Naive thymus-derived CD4-positive, alpha-beta T cell (primary cell): ENCODE measurements at regions of chr3 and their contacts with region 1.

Region 1: DNA sequence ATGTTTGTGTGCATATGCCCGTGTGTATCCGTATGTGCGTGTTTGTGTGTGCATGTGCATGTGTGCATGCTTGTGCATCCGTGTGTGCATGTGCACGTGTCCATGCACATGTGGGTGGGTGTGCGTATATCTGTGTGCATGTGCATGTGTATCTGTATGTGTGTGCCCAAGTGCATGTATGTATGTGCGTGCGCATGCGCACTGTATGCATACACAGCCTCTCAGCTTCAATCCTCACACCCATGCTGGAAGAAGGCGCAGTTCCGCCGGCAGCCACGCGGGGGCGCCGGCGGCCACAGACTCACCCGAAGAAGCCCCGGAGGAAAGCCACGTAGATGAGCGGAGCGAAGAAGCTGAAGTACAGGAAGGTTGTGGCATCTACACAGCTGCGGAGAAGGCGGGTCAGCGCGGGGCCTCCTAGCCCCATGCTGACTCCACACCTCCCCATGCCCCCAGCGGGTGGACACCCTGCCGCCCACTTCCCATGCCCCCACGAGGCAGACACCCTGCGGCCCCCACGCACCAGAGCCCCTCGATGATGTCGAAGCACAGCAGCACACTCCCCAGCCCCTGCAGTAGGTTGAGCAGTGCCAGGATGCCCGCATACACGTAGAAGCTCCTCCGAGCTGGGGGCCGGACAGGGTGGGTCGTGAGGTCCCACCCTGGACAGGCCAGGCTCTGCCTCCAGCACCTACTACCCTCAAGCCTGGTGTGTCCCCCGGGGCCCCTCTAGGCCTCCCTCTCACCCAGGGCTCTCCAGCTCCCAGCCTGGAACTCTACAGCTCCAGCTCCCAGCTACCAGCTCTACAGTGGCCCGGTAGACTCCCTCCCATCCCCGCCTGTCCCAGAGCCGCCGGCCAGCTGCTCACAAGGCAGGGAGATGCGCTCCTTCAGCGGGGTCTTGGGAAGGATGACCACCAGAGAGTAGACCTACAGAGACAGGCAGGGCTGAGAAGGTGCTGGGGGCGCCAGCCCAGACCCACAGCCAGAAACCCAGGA is 15.4 kb downstream of the TPRA1 start:
- DNase-seq: peak; percentile 77 to 86 (median 83)
- ATAC-seq: peak; percentile 96
- H3K4me3 ChIP-seq: no peak overlapping the region
- H3K4me3 Mint-ChIP-seq: peak overlapping the region in 7 of 10 donors; percentile 18 to 57 (median 32)
- H3K27ac ChIP-seq: peak overlapping the region; percentile 39
- H3K27ac Mint-ChIP-seq: peak overlapping the region in 8 of 9 donors; percentile 4 to 81 (median 50)
- H3K4me1 ChIP-seq: peaks cover 0 to 7% of the 10 kb centered on the region in 2 donors
- H3K4me1 Mint-ChIP-seq: peaks cover 8 to 22% (median 13%) of the 10 kb centered on the region in 7 donors
- H3K27me3 ChIP-seq: no peaks in the 10 kb centered on the region
- H3K27me3 Mint-ChIP-seq: no peaks in the 10 kb centered on the region

Region 2: GRCh38 chr3:127351775-127352350 is 223.3 kb before region 1 on chr3:
- CTCF ChIA-PET with region 1: no interaction called
- POLR2A ChIA-PET with region 1: no interaction called
- intact Hi-C with region 1: no loop called
- DNase-seq: no peak
- ATAC-seq: no peak
- H3K4me3 ChIP-seq: no peak overlapping the region
- H3K4me3 Mint-ChIP-seq: no peak overlapping the region
- H3K27ac ChIP-seq: no peak overlapping the region
- H3K27ac Mint-ChIP-seq: no peak overlapping the region
- H3K4me1 ChIP-seq: no peaks in the 10 kb centered on the region
- H3K4me1 Mint-ChIP-seq: no peaks in the 10 kb centered on the region
- H3K27me3 ChIP-seq: no peaks in the 10 kb centered on the region
- H3K27me3 Mint-ChIP-seq: peaks cover 0 to 28% (median 13%) of the 10 kb centered on the region in 5 donors

Region 3: DNA sequence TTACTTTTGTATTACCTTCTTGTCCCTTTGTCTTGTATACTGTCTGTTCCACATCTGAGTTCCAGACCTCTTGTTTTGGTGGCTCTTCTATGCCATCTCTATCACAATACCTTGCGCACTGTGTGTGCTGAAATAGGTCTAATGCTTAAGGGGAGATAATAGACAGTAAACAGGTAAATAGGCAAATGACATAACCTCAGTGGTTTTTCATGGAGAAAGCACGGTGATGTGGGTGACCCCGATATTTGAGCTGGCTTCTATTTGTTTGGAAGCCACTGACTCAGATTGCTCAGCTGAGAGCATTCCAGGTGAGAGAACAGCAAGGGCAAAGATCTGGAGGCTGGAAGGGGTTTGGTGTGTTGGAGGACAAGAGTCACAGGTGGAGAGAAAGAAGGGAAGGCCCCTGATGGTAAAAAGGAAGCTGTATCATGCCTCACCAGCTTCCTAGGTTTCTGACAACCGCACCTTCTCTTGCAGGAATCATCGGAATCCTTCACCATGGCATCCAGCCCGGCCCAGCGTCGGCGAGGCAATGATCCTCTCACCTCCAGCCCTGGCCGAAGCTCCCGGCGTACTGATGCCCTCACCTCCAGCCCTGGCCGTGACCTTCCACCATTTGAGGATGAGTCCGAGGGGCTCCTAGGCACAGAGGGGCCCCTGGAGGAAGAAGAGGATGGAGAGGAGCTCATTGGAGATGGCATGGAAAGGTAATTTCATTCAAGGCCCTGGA is 23.8 kb after region 1 on chr3:
- CTCF ChIA-PET with region 1: interaction called, 9 read pairs
- POLR2A ChIA-PET with region 1: no interaction called
- intact Hi-C with region 1: loop called in 1 of 2 experiments (anchors 1 kb)
- DNase-seq: no peak
- ATAC-seq: no peak
- H3K4me3 ChIP-seq: peak overlapping the region; percentile 75
- H3K4me3 Mint-ChIP-seq: peak overlapping the region; percentile 62 to 89 (median 82)
- H3K27ac ChIP-seq: peak overlapping the region; percentile 70
- H3K27ac Mint-ChIP-seq: peak overlapping the region; percentile 57 to 93 (median 86)
- H3K4me1 ChIP-seq: peaks cover 7% of the 10 kb centered on the region in 2 donors
- H3K4me1 Mint-ChIP-seq: peaks cover 13 to 57% (median 16%) of the 10 kb centered on the region in 7 donors
- H3K27me3 ChIP-seq: no peaks in the 10 kb centered on the region
- H3K27me3 Mint-ChIP-seq: no peaks in the 10 kb centered on the region

Region 4: DNA sequence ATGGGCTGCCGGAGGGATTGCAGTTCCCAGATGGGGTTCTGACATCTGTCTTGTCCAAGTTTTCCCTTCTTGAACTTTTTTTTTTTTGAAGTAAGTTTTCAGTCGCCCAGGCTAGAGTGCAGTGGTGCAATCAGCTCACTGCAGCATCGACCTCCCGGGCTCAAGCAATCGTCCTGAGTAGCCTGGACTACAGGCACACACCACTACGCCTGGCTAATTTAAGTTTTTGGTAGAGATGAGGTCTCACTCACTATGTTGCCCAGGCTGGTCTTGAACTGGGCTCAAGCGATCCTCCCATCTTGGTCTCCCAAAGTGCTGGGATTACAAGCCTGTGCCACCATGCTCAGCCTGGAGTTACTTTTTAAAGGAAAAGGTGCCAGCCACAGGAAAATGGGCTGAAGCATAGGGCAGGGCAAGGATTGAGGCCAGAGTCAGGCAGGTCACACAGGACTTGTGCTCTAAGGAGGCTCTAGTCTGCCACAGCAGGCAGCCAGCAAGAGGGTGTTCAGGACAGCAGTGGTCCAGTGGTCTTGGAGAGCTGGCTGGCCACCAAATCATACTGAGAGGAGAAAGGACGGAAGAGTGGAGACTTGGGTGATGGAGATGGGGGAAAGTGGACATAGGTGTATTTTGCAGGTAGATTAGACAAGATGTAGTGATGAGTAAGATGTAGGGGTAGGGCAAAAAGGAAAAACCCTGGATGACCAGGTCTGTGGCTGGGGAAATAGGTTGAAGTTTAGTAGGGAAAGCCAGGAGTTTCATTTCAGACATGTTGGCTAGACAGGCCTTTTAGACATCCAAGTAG is 47.8 kb after region 1 on chr3:
- CTCF ChIA-PET with region 1: no interaction called
- POLR2A ChIA-PET with region 1: no interaction called
- intact Hi-C with region 1: no loop called
- DNase-seq: no peak
- ATAC-seq: no peak
- H3K4me3 ChIP-seq: no peak overlapping the region
- H3K4me3 Mint-ChIP-seq: no peak overlapping the region
- H3K27ac ChIP-seq: no peak overlapping the region
- H3K27ac Mint-ChIP-seq: peak overlapping the region in 1 of 9 donors; percentile 45
- H3K4me1 ChIP-seq: peaks cover 0 to 6% of the 10 kb centered on the region in 2 donors
- H3K4me1 Mint-ChIP-seq: peaks cover 0 to 14% (median 4%) of the 10 kb centered on the region in 7 donors
- H3K27me3 ChIP-seq: no peaks in the 10 kb centered on the region
- H3K27me3 Mint-ChIP-seq: peaks cover 0 to 21% (median under 1%) of the 10 kb centered on the region in 5 donors

Region 5: DNA sequence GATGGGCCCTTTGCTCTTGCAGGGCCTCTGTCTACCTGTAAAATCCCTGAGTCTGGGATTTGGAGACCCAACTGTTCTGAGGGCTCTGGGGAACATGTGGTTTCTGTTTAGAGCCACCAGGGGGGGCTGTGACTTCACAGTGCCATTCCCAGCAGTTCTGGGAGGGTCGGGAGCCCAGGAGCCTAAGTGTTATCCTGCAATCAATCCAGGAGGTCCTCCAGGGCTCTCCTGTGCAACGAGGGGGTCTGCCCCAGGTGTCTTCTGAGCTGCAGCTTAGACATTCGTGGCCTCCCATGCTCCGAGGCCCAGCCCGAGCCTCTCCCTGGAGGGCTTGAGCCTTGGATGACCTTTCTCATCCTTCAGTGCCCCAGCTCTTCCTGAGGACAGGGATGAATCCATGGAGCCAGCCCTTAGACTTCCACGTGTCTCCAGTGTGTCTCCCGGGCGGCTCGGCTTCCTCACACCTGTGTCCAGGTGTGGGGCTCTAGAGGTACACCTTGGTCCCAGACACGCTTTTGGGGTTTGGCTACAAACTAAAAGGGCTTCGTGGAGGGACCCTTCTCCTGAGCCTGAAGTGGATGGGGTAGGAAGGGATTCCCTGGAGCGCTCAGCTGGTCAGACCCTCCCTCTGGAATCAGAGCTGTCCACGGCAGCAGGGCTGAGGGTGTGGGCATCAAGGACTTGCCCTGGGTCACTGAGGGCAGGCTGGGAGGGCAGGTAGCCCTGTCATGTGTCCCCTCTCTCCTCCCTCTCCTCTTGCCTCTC is 77.2 kb after region 1 on chr3:
- CTCF ChIA-PET with region 1: no interaction called
- POLR2A ChIA-PET with region 1: no interaction called
- intact Hi-C with region 1: loop called in 1 of 2 experiments (anchors 2 kb)
- DNase-seq: peak in 3 of 9 donors; percentile 16 to 44 (median 35)
- ATAC-seq: peak; percentile 83
- H3K4me3 ChIP-seq: no peak overlapping the region
- H3K4me3 Mint-ChIP-seq: no peak overlapping the region
- H3K27ac ChIP-seq: no peak overlapping the region
- H3K27ac Mint-ChIP-seq: peak overlapping the region in 1 of 9 donors; percentile 3
- H3K4me1 ChIP-seq: no peaks in the 10 kb centered on the region
- H3K4me1 Mint-ChIP-seq: peaks cover 0 to 2% (median 0%) of the 10 kb centered on the region in 7 donors
- H3K27me3 ChIP-seq: no peaks in the 10 kb centered on the region
- H3K27me3 Mint-ChIP-seq: peaks cover 0 to 4% (median 0%) of the 10 kb centered on the region in 5 donors

Region 6: DNA sequence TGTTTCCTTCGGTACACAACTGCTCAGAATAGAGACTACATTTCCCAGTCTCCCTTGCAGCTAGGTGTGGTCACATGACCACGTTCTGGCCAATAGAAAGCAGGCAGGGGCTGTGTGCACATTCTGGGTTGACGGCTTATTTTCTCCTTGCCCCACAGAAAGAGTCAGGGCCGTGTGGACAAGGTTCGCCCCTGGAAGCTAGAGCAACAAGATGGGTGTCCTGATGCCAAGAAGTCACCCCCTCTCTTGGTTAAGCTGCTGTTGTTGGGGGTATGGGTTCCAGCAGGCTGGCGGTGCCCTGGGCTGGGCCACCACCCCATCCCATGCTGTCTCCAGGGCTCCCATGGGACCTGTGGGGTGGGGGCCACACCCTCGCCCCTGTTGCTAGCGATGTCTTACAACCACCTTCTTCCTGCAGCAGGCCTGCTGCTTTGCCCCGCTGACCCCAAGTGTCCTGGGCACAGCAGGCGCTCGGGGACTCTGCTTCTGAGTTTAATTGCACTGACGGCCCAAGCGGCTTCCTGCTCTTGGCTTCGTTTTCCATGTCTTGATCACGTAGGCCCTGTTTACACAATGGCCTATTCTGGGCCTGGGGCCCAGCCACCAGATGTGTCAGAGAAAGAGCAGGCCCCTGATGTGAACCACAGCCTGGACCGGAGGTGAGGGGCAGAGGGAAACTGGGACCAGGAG is 122.5 kb after region 1 on chr3:
- CTCF ChIA-PET with region 1: interaction called, 17 read pairs
- POLR2A ChIA-PET with region 1: no interaction called
- intact Hi-C with region 1: loop called (anchors 1 kb)
- DNase-seq: peak in 8 of 9 donors; percentile 27 to 59 (median 48)
- ATAC-seq: peak; percentile 76
- H3K4me3 ChIP-seq: no peak overlapping the region
- H3K4me3 Mint-ChIP-seq: peak overlapping the region in 2 of 10 donors; percentile 31 to 52
- H3K27ac ChIP-seq: no peak overlapping the region
- H3K27ac Mint-ChIP-seq: peak overlapping the region in 1 of 9 donors; percentile 77
- H3K4me1 ChIP-seq: no peaks in the 10 kb centered on the region
- H3K4me1 Mint-ChIP-seq: peaks cover 0 to 5% (median 4%) of the 10 kb centered on the region in 7 donors
- H3K27me3 ChIP-seq: no peaks in the 10 kb centered on the region
- H3K27me3 Mint-ChIP-seq: peaks cover 0 to 5% (median 0%) of the 10 kb centered on the region in 5 donors

Region 7: GRCh38 chr3:127729556-127730056 is 154.4 kb after region 1 on chr3:
- CTCF ChIA-PET with region 1: no interaction called
- POLR2A ChIA-PET with region 1: no interaction called
- intact Hi-C with region 1: no loop called
- DNase-seq: no peak
- ATAC-seq: peak; percentile 84
- H3K4me3 ChIP-seq: no peak overlapping the region
- H3K4me3 Mint-ChIP-seq: no peak overlapping the region
- H3K27ac ChIP-seq: no peak overlapping the region
- H3K27ac Mint-ChIP-seq: no peak overlapping the region
- H3K4me1 ChIP-seq: no peaks in the 10 kb centered on the region
- H3K4me1 Mint-ChIP-seq: peaks cover 0 to 2% (median 0%) of the 10 kb centered on the region in 7 donors
- H3K27me3 ChIP-seq: no peaks in the 10 kb centered on the region
- H3K27me3 Mint-ChIP-seq: peaks cover 19 to 36% (median 26%) of the 10 kb centered on the region in 5 donors

Region 8: DNA sequence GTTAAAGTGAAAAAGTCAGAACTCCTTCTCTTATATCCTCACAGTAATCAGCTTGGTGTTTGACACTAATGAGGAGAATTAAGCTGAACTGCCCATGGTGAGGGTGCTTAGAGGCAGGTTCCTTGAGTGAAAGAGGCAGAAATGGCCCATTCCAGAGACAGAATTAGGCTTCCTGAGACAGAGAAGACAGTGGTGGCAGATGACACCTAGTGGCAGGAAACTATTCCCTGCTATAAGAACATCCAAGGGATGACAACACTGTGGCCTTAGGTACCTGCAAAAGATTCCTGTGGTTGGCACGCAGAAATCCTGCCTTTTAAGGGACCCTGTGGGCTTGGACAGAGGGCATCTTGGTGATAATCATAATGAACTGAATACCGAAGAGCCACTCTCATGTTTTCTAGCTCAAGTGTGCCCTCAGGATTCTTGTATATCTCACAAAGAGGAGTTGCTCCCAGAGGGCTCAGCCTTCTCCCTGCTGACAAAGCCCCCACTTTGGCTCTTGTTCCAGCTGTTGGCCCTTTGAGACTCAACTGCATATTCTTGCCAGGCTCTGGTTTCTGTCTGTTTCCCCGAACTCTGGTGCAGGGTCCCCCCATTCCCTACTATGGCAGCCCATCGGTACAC is 395.9 kb after region 1 on chr3:
- CTCF ChIA-PET with region 1: interaction called, 5 read pairs
- POLR2A ChIA-PET with region 1: no interaction called
- intact Hi-C with region 1: loop called in 1 of 2 experiments (anchors 1 kb)
- DNase-seq: peak in 5 of 9 donors; percentile 12 to 25 (median 20)
- ATAC-seq: peak; percentile 58
- H3K4me3 ChIP-seq: no peak overlapping the region
- H3K4me3 Mint-ChIP-seq: no peak overlapping the region
- H3K27ac ChIP-seq: no peak overlapping the region
- H3K27ac Mint-ChIP-seq: no peak overlapping the region
- H3K4me1 ChIP-seq: no peaks in the 10 kb centered on the region
- H3K4me1 Mint-ChIP-seq: no peaks in the 10 kb centered on the region
- H3K27me3 ChIP-seq: no peaks in the 10 kb centered on the region
- H3K27me3 Mint-ChIP-seq: peaks cover 15 to 42% (median 24%) of the 10 kb centered on the region in 5 donors

Region 9: GRCh38 chr3:128607710-128608048 is 1032.5 kb after region 1 on chr3:
- CTCF ChIA-PET with region 1: no interaction called
- POLR2A ChIA-PET with region 1: no interaction called
- intact Hi-C with region 1: loop called in 1 of 2 experiments (anchors 1 kb)
- DNase-seq: no peak
- ATAC-seq: no peak
- H3K4me3 ChIP-seq: peak overlapping the region; percentile 64
- H3K4me3 Mint-ChIP-seq: peak overlapping the region in 4 of 10 donors; percentile 9 to 54 (median 43)
- H3K27ac ChIP-seq: no peak overlapping the region
- H3K27ac Mint-ChIP-seq: no peak overlapping the region
- H3K4me1 ChIP-seq: peaks cover 0 to 3% of the 10 kb centered on the region in 2 donors
- H3K4me1 Mint-ChIP-seq: peaks cover 0 to 5% (median 0%) of the 10 kb centered on the region in 7 donors
- H3K27me3 ChIP-seq: no peaks in the 10 kb centered on the region
- H3K27me3 Mint-ChIP-seq: peaks cover 0 to 17% (median 5%) of the 10 kb centered on the region in 5 donors